Dorsolateral prefrontal cortex (tissue), 120 donors: ENCODE measurements at regions of chr2 and their contacts with region 1.

Region 1: GRCh38 chr2:224039124-224039940 is at the start of gene SERPINE2:
- DNase-seq: peak; percentile 22 to 82 (median 70)
- H3K4me3 ChIP-seq: peak within 1 kb of the TSS; percentile 46 to 84 (median 71)
- H3K27ac ChIP-seq: peak within 1 kb of the TSS in 54 of 59 donors; percentile 2 to 90 (median 78)
- H3K27me3 ChIP-seq: peaks cover 0 to 17% (median 0%) of the 10 kb centered on the region in 45 donors
- CTCF ChIP-seq: peak in 54 of 56 donors; percentile 46 to 82 (median 60)
- total RNA-seq, gene SERPINE2: 66.5 to 251 (median 114) TPM

Region 2: GRCh38 chr2:223744573-223744972 is 294.8 kb before region 1 on chr2:
- intact Hi-C with region 1: no loop called
- DNase-seq: no peak
- H3K4me3 ChIP-seq: no peak overlapping the region
- H3K27ac ChIP-seq: no peak overlapping the region
- H3K27me3 ChIP-seq: peaks cover 0 to 4% (median 0%) of the 10 kb centered on the region in 45 donors
- CTCF ChIP-seq: no peak

Region 3: DNA sequence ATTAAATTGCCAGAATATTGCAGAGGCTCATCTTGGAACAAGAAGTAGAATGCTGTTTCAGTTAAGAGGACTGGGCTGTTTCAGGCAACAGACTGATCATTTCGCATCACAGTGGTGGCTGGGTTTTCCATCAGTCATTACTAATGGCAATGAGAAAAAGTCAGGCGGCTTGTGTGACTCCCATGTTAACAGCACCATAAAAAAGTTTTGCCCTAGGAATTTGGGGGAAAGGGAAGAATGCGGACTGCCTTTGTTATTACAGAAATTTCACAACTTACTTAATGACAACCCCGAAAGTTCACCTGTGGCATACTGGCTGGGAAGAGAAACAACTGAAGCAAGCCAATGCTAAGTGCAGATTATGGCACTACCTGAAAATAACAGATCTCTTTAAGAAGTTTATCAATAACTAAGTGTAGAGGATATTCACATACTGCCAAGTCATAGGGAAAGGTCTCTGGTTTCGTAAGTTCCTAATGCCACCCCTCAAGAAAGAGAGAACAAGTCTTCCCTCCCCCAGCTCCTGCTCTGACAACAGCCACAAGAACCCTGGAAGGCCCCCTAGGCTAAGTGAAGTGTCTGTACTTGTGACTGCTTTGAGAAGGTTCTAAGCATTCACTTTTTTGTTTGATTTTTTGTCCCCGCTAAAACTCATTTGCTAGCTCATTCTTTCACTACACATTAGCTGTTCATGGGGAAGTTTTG is 161.4 kb before region 1 on chr2:
- intact Hi-C with region 1: no loop called
- DNase-seq: no peak
- H3K4me3 ChIP-seq: no peak overlapping the region
- H3K27ac ChIP-seq: no peak overlapping the region
- H3K27me3 ChIP-seq: no peaks in the 10 kb centered on the region
- CTCF ChIP-seq: no peak

Region 4: GRCh38 chr2:223993621-223994232 is 45.6 kb before region 1 on chr2:
- intact Hi-C with region 1: loop called (anchors 2 to 5 kb)
- DNase-seq: peak in 7 of 10 donors; percentile 40 to 80 (median 57)
- H3K4me3 ChIP-seq: no peak overlapping the region
- H3K27ac ChIP-seq: peak overlapping the region in 2 of 59 donors; percentile 14 to 27
- H3K27me3 ChIP-seq: no peaks in the 10 kb centered on the region
- CTCF ChIP-seq: peak; percentile 71 to 95 (median 90)

Region 5: GRCh38 chr2:224142397-224143312 is 103.3 kb after region 1 on chr2:
- intact Hi-C with region 1: loop called (anchors 1 to 5 kb)
- DNase-seq: no peak
- H3K4me3 ChIP-seq: no peak overlapping the region
- H3K27ac ChIP-seq: no peak overlapping the region
- H3K27me3 ChIP-seq: peaks cover 0 to 5% (median 0%) of the 10 kb centered on the region in 45 donors
- CTCF ChIP-seq: peak in 33 of 56 donors; percentile 8 to 53 (median 28)

Region 6: GRCh38 chr2:224195925-224196571 is 156.7 kb after region 1 on chr2:
- intact Hi-C with region 1: loop called in 1 of 2 experiments (anchors 5 kb)
- DNase-seq: peak in 9 of 10 donors; percentile 5 to 76 (median 55)
- H3K4me3 ChIP-seq: no peak overlapping the region
- H3K27ac ChIP-seq: peak overlapping the region in 44 of 59 donors; percentile 3 to 92 (median 67)
- H3K27me3 ChIP-seq: no peaks in the 10 kb centered on the region
- CTCF ChIP-seq: peak in 4 of 56 donors; percentile 13 to 22 (median 16)

Region 7: DNA sequence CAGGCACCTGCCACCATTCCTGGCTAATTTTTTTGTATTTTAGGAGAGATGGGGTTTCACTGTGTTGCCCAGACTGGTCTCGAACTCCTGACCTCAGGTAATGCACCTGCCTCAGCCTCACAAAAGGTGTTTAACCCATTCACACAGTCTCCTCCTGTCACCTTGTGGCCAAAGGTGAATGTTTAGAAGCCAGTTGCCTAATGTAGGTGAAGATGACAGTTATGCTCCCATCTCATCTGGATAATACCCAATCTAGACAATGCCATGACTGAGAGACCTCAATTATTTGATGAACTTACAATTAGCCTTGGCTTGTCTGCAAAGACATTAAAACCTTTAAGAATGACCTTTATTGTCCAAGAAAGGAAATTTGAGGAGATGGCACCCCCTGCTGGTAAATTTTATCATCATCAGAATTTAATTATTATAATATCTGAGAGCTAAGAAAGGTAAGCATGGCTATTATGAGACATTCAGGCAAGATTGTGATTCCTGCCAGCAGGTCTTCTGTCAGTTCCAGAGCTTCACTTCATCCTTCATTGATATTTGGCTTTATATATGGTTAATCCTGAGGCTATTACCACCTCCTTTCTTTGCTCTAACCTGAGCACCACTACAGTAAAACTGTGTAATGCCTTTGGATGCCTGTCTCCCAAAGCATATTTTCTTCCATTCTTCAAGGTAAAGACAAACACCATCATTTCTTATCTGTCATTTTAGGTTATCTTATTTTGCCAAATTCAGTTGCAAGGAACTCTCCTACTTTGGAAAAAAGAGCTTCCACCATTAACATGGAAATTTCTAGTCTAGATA is 245.0 kb after region 1 on chr2:
- intact Hi-C with region 1: loop called (anchors 1 to 5 kb)
- DNase-seq: no peak
- H3K4me3 ChIP-seq: no peak overlapping the region
- H3K27ac ChIP-seq: no peak overlapping the region
- H3K27me3 ChIP-seq: no peaks in the 10 kb centered on the region
- CTCF ChIP-seq: peak; percentile 63 to 95 (median 82)